HEK293T (cell line): ENCODE measurements at regions of chr1 and their contacts with region 1.

Region 1: GRCh38 chr1:200029035-200029821 is 1.7 kb downstream of the NR5A2 start:
- DNase-seq: peak; percentile 86

Region 2: DNA sequence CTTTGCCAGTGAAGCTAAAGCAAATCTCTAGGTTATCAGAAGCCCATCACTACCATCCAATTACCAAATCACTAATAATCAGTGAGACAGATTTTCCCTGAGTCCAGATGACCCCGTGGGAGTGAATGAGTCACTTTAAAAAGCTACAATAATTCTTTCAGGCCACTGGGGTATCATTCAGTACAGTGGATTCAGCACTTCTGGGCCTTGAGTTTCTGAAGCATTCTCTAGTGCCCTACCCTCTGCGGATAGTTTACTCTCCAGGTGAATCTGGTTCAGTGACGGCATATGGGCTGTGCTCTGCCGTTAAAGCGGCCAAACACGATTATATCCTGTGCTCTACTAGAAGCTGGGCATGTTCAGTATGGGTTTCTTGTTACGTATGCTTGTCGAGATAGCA is 24.4 kb after region 1 on chr1:
- CTCF ChIA-PET with region 1: no interaction called
- POLR2A ChIA-PET with region 1: no interaction called
- DNase-seq: no peak

Region 3: GRCh38 chr1:200075938-200076550 is 46.8 kb after region 1 on chr1:
- CTCF ChIA-PET with region 1: no interaction called
- POLR2A ChIA-PET with region 1: no interaction called
- DNase-seq: no peak

Region 4: GRCh38 chr1:200128944-200129885 is 100.0 kb after region 1 on chr1:
- CTCF ChIA-PET with region 1: no interaction called
- POLR2A ChIA-PET with region 1: no interaction called
- DNase-seq: no peak

Region 5: GRCh38 chr1:200306944-200307754 is 277.9 kb after region 1 on chr1:
- CTCF ChIA-PET with region 1: interaction called, 10 read pairs
- POLR2A ChIA-PET with region 1: no interaction called
- DNase-seq: peak; percentile 70